A673 (cell line): ENCODE measurements at regions of chr7 and their contacts with region 1.

Region 1: GRCh38 chr7:149422129-149422913 is 38.5 kb downstream of the ZNF777 start:
- DNase-seq: peak; percentile 79
- H3K4me3 ChIP-seq: peak overlapping the region; percentile 44
- H3K27ac ChIP-seq: no peak overlapping the region
- H3K4me1 ChIP-seq: peaks cover 4% of the 10 kb centered on the region
- H3K27me3 ChIP-seq: no peaks in the 10 kb centered on the region
- CTCF ChIP-seq: peak; percentile 46; the same call in 1 of the 2 replicates

Region 2: GRCh38 chr7:149497456-149498261 is 75.3 kb after region 1 on chr7 and contains the start of gene ZNF746:
- CTCF ChIA-PET with region 1: no interaction called
- POLR2A ChIA-PET with region 1: no interaction called
- intact Hi-C with region 1: loop called (anchors 5 kb)
- DNase-seq: peak; percentile 91
- H3K4me3 ChIP-seq: peak within 1 kb of the TSS; percentile 90
- H3K27ac ChIP-seq: peak within 1 kb of the TSS; percentile 76
- H3K4me1 ChIP-seq: peaks cover 12% of the 10 kb centered on the region
- H3K27me3 ChIP-seq: peaks cover 24% of the 10 kb centered on the region
- CTCF ChIP-seq: peak; percentile 43
- total RNA-seq, gene ZNF746: 22.5 and 24.0 TPM in 2 replicates

Region 3: DNA sequence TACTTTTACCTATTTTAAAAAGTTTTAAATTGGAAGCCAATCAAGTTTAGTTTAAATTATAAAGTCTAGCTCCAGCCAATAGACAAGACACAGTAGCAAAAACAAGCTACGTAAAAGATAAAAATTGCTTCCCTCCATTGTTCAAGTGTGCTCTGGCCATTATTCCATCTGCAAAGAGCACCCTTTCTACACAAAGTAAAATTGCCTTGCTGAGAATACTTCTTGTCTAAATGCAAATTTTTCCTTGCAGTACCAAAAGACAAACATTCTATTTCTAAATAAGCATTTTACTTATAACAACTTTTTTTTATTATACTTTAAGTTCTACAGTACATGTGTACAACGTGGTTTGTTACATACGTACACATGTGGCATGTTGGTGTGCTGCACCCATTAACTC is 151.2 kb after region 1 on chr7:
- CTCF ChIA-PET with region 1: no interaction called
- POLR2A ChIA-PET with region 1: no interaction called
- intact Hi-C with region 1: no loop called
- DNase-seq: no peak
- H3K4me3 ChIP-seq: no peak overlapping the region
- H3K27ac ChIP-seq: no peak overlapping the region
- H3K4me1 ChIP-seq: no peaks in the 10 kb centered on the region
- H3K27me3 ChIP-seq: no peaks in the 10 kb centered on the region
- CTCF ChIP-seq: no peak